ENCODE measurements at regions of chr9 and their contacts with region 1.

Region 1: GRCh38 chr9:34591248-34591916 is 1.9 kb upstream of the CNTFR start:
- DNase-seq: peak; percentile 56 to 92
- H3K4me3 ChIP-seq: no peak overlapping the region
- H3K4me1 ChIP-seq: no peaks in the 10 kb centered on the region; the same call in 1 of the 2 replicates
- H3K27me3 ChIP-seq: peaks cover 28% of the 10 kb centered on the region

Region 2: DNA sequence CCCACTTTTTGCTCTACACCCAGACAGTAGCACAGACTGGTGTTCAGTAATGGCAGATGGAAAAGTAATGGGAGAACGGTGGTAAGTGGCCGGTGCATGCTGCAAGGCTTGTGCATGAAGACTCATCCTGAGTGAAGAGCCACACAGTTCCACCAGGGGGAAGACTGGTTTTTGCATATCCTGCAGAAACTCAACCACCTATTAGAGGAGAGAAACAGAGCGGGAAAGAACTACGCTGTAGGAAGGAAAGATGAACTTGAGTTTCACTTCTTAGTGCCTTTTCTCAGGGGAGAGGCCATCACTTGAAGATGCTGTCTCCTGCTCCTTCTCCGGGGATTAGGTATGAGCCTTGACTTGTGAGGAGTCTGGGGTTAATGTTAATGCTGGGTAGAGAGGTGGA is 805.5 kb before region 1 on chr9:
- in situ Hi-C with region 1: no loop called
- DNase-seq: no peak
- H3K4me3 ChIP-seq: no peak overlapping the region
- H3K4me1 ChIP-seq: no peaks in the 10 kb centered on the region
- H3K27me3 ChIP-seq: peaks cover 14% of the 10 kb centered on the region

Region 3: GRCh38 chr9:34384368-34385165 is 206.8 kb before region 1 on chr9:
- in situ Hi-C with region 1: no loop called
- DNase-seq: peak in 1 of 2 experiments; percentile 1
- H3K4me3 ChIP-seq: no peak overlapping the region
- H3K4me1 ChIP-seq: peaks cover 3% of the 10 kb centered on the region
- H3K27me3 ChIP-seq: no peaks in the 10 kb centered on the region

Region 4: GRCh38 chr9:34430843-34431437 is 160.4 kb before region 1 on chr9:
- in situ Hi-C with region 1: loop called (anchors 5 kb)
- DNase-seq: peak; percentile 20 to 67
- H3K4me3 ChIP-seq: no peak overlapping the region
- H3K4me1 ChIP-seq: no peaks in the 10 kb centered on the region
- H3K27me3 ChIP-seq: no peaks in the 10 kb centered on the region